ENCODE measurements at regions of chr5 and their contacts with region 1.

Region 1: GRCh38 chr5:52948418-52949076 is 40.6 kb upstream of the ITGA2 start:
- DNase-seq: peak; percentile 26
- ATAC-seq: peak; percentile 89

Region 2: DNA sequence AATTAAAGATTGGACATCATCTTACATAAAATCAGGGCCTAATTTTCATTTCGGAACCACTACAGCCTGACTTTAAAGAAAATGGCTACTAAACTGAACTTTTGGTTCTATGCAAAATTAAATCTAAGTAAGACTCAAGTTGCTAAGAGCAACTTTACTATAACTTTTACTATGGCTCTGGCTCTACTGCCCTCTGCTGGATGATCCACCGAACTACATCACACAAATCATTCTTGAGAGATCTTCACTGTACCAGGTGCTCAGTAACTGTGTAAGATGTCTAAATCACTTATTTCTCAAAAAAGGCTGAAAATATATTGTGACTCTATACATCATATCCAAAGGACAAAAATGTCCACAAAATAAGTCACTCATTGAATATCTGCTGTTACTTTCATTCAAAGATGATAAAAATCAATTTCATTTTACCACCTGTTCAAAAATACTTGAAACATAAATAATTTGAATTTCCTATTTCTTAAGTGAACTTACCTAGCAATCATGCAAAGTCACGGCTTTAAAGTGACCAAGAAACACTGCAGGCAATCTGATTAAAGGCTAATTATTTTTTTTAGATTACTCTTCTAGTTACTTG is 147.5 kb after region 1 on chr5:
- intact Hi-C with region 1: loop called (anchors 1 kb)
- DNase-seq: no peak
- ATAC-seq: peak; percentile 66